ENCODE measurements at regions of chr1 and their contacts with region 1.

Region 1: DNA sequence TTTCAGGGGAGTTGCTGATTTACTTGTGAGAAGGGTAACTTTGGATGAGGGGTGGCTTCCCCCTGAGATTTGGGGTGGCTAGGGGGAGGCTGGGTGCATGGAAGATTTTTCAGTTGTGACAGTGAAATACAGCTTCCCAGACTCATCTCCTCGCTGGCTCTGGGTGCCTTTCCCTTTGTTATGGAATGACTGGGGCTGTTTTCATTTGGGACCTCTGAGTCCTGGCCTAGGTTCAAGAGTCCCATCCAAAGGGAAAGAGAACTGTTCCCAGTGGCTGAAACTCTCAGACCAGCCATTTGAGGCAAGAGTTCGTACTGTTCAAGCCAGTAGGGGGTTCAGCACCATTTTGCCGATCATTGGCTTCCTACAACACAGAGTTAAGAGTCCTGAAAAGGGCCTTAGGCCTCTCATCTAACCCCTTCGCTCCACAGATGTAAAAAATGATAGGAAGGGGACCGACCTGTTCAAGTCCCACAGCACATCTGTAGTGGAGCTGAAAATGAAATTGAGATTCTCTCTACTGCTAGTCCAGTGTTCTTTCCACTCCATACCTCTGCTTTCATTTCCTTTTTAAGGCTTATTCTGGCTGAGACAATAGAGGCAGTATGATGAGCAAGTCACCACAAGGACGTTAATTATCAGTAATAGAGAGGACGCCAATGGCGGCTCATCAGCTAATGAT is 958 bp downstream of the DDR2 start:
- DNase-seq: no peak

Region 2: GRCh38 chr1:162605225-162605927 is 27.8 kb before region 1 on chr1:
- intact Hi-C with region 1: no loop called
- DNase-seq: no peak

Region 3: DNA sequence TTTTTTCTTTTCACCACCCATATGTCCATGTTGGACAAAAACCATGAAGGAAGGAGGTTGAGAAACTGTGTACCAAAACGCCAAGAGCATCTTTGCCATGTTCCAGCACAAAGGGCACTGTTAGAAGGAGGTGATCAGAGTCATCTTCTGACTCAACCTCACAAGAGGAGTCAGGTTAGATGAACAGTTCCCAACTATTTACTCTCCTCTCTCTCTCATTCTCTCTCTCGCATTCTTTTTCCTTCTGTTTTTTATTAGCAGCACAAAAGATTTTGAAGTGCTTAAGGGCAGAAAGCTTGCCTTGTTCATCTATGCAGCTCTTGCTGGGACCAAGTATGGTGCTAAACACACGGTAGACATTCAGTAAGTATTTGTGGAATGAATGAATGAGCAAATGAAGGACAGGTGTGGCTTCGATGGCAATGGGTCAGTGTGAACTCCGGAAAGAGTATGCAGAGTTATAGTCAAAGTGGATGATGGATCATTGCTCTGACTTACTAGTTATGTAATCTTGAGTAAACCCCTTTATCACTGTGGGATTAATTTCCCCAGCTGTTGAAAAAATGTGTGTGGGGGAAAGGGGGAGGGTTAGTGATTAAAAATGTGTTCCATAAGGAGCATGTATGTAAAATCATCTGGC is 32.9 kb after region 1 on chr1:
- intact Hi-C with region 1: no loop called
- DNase-seq: no peak

Region 4: DNA sequence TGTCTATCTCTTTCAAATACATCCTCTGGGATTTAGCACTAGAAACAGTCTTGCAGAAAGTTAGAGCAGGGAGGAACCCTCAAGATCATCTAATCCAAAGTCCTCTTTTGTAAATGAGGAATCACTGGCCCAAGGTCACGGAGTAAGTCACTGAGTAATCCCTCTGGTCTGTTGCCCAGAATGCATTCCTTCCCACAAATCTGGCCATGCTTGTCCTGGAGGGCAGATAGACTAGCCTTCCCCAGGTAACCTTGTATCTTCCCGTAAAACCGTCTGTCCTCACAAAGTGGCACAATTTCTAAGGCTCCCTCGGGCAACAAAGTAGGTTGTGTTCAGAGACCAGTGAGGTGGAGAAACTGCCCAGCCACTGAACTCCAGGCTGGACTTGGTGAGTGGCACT is 45.2 kb after region 1 on chr1:
- intact Hi-C with region 1: loop called (anchors 5 kb)
- DNase-seq: no peak

Region 5: GRCh38 chr1:162696286-162696862 is 63.2 kb after region 1 on chr1:
- intact Hi-C with region 1: loop called (anchors 5 kb)
- DNase-seq: peak; percentile 83